ENCODE measurements at regions of chr9 and their contacts with region 1.

Region 1: GRCh38 chr9:98536542-98537173 is 172.1 kb downstream of the GABBR2 start:
- DNase-seq: peak; percentile 29
- H3K4me3 ChIP-seq: no peak overlapping the region
- H3K27ac ChIP-seq: no peak overlapping the region
- H3K4me1 ChIP-seq: no peaks in the 10 kb centered on the region
- H3K27me3 ChIP-seq: peaks cover 6% of the 10 kb centered on the region
- CTCF ChIP-seq: peak; percentile 52

Region 2: DNA sequence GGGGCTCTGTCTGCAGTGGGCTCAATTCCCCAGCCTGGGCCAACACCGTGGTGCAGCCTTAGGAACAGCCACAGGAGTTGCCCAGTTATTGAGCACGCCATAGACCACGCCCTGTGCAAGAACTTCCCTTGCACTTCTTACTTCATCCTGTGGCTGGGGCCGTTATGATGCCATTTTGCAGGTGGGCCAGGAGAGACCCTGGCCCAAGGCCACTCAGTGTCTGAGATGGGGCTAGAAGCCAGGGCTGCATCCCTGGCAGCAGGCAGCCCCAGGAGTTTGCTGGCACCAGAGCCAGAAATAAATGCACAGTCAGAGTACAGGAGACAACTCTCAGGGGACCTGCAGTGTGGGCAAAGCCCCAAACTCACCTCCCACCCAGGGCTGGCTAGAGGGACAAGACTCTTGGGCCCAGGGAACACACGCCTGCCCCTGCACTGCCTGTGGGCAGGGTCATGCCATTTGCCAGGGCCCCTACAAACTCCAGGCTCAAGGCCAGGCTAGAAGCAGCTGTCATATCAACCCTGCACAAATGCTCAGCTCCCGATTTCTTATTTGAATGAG is 351.0 kb before region 1 on chr9:
- CTCF ChIA-PET with region 1: no interaction called
- POLR2A ChIA-PET with region 1: no interaction called
- intact Hi-C with region 1: no loop called
- DNase-seq: no peak
- H3K4me3 ChIP-seq: no peak overlapping the region
- H3K27ac ChIP-seq: no peak overlapping the region
- H3K4me1 ChIP-seq: no peaks in the 10 kb centered on the region
- H3K27me3 ChIP-seq: no peaks in the 10 kb centered on the region
- CTCF ChIP-seq: no peak

Region 3: DNA sequence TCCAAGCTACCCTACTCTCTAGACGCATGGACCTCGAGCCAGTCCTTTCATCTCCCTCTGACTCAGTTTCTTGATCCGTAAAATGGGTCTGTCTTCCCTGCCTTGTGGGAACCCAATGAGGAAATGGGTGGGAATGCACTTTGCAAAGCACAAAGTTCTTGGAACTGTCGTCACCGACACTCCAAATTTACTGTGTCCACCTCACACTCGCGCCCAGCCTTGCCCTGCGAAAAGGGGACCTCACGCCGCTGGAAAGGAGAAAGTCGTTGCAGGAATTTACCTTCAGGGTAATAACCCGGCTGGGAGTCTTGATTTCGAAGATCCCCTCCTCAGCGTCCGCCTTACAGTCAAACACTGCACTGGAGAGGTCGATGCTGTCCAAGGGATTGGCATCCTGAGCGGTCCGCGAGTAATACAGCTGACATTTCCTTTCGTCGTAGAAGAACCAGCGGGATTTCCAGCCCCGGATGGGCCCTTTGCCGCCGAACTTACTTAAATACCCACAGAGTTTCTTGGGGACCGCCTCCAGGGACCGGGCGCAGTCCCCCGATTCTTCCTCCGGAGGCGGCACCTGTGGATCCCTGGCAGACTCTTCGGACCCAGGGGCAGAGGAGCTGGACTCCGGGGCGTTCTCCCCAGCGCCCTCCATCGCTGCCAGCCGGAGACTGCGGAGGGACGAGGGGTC is 281.6 kb before region 1 on chr9:
- CTCF ChIA-PET with region 1: no interaction called
- POLR2A ChIA-PET with region 1: no interaction called
- intact Hi-C with region 1: no loop called
- DNase-seq: peak; percentile 41
- H3K4me3 ChIP-seq: peak overlapping the region; percentile 75
- H3K27ac ChIP-seq: peak overlapping the region; percentile 83
- H3K4me1 ChIP-seq: peaks cover 16% of the 10 kb centered on the region
- H3K27me3 ChIP-seq: no peaks in the 10 kb centered on the region
- CTCF ChIP-seq: no peak

Region 4: GRCh38 chr9:98707166-98708102 is 170.8 kb after region 1 on chr9:
- CTCF ChIA-PET with region 1: no interaction called
- POLR2A ChIA-PET with region 1: no interaction called
- intact Hi-C with region 1: loop called (anchors 10 kb)
- DNase-seq: peak; percentile 57
- H3K4me3 ChIP-seq: no peak overlapping the region
- H3K27ac ChIP-seq: no peak overlapping the region
- H3K4me1 ChIP-seq: no peaks in the 10 kb centered on the region
- H3K27me3 ChIP-seq: peaks cover 88% of the 10 kb centered on the region
- CTCF ChIP-seq: peak; percentile 63

Region 5: GRCh38 chr9:98775831-98776441 is 239.3 kb after region 1 on chr9:
- CTCF ChIA-PET with region 1: no interaction called
- POLR2A ChIA-PET with region 1: no interaction called
- intact Hi-C with region 1: loop called (anchors 5 kb)
- DNase-seq: peak; percentile 80
- H3K4me3 ChIP-seq: no peak overlapping the region
- H3K27ac ChIP-seq: no peak overlapping the region
- H3K4me1 ChIP-seq: no peaks in the 10 kb centered on the region
- H3K27me3 ChIP-seq: no peaks in the 10 kb centered on the region
- CTCF ChIP-seq: peak; percentile 81